ENCODE measurements at regions of chr14 and their contacts with region 1.

Region 1: DNA sequence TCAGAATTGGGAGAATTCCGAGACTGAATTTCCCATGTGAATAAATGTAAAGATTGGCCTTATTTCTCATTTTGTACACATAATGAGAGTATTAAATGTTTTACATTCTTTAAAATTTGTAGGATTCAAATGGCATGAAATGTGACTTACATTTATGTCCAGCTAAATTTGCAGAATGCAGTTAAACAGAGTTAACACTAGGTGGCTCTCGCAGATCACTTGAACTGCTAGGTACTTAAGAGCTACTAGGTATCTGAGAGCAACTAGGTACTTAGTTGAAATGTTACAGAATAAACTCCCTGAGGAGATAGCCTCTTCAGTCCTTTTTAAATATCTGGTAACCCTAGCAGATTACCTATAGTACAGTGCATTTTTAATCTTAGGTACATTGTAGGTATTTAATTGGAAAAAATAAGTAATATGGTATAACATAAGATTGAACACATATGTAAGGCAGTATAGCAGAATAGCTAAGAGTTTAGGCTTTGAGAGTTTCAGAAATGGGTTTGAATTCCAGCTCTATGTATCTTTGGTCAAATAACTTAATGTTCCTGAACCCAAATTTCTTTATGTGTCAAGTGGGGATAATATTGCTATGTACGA is 73.8 kb downstream of the KIAA0586 start:
- DNase-seq: peak in 1 of 2 donors; percentile 22
- ATAC-seq: peak in 3 of 8 donors; percentile 44 to 62 (median 50)
- H3K4me3 ChIP-seq: no peak overlapping the region
- H3K27ac ChIP-seq: no peak overlapping the region
- H3K4me1 ChIP-seq: no peaks in the 10 kb centered on the region
- H3K27me3 ChIP-seq: no peaks in the 10 kb centered on the region
- CTCF ChIP-seq: peak; percentile 57 to 87 (median 82)

Region 2: DNA sequence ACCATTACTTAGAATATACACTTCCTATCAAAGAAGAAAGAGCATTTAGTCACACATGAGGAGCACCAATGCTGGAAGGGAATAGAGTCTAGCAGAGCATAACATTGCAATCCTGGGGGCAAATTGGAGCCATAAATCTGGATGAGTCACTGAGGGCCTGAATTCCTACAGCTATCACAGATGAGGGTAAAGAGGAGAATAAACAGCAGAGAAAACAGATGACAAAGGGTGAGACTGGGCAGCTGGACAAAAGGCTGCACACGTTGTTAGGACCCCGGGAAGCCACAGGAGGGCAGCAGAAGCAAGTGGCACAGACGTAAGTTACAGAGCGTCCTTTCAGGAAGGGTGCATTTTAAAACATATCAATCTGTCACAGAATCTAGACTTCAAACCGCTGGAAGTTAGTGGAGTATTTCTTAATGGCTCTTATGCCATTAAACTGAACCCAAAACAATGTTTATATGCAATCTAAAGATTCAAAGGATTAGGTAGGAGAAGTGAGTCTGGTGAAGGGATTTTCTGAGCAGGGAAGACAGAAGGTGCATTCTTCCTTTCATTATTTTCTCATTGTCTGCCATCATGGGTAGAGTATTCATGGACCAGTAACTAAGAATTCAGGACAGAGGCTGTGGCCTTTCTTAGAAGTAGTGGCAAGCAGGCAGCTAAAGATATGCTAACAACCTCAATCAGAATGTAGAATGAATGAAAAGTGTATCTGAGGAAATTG is 527.3 kb after region 1 on chr14:
- intact Hi-C with region 1: loop called in 1 of 10 experiments (anchors 10 kb)
- DNase-seq: peak; percentile 25 to 41
- ATAC-seq: peak in 7 of 8 donors; percentile 58 to 81 (median 74)
- H3K4me3 ChIP-seq: no peak overlapping the region
- H3K27ac ChIP-seq: no peak overlapping the region
- H3K4me1 ChIP-seq: peaks cover 0 to 9% (median 0%) of the 10 kb centered on the region in 9 donors
- H3K27me3 ChIP-seq: no peaks in the 10 kb centered on the region
- CTCF ChIP-seq: peak; percentile 41 to 83 (median 77)

Region 3: GRCh38 chr14:59055439-59056045 is 554.2 kb after region 1 on chr14:
- intact Hi-C with region 1: loop called in 9 of 10 experiments (anchors 2 to 10 kb)
- DNase-seq: peak in 1 of 2 donors; percentile 13
- ATAC-seq: peak in 5 of 8 donors; percentile 38 to 81 (median 74)
- H3K4me3 ChIP-seq: no peak overlapping the region
- H3K27ac ChIP-seq: no peak overlapping the region
- H3K4me1 ChIP-seq: no peaks in the 10 kb centered on the region
- H3K27me3 ChIP-seq: peaks cover 0 to 9% (median 0%) of the 10 kb centered on the region in 7 donors
- CTCF ChIP-seq: peak; percentile 50 to 87 (median 75)

Region 4: DNA sequence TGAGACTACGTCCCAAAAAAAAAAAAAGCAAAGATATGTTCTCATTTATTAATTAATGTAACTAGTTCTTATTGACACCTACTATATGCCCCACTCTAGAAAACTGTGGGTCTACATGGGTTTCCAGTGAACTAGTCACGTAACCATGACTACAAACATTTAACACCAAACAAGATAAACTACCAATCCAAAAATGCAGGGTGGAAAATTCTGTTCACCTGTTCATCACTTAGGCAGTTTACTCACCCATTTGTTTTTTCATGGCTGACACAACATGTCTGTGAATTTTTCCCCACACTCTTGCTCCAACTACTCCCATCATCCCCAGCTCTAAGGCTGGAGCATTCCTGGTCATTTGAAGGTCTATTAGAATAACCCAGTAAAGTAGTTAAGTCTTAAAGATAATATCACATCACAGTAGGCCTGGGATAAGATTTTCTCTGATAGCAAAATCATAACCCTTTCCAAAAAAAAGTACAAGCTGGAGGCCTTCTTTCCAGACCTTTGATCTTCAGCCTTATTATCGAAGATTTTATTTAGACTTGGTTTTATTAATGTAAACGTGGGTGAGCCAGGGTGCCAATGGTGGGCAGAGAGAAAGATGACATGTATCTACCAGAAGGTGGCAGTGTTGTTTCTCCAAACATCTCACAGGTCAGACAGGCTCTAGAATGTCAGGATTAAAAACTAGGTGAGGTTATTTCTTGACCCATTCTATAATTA is 625.6 kb after region 1 on chr14:
- intact Hi-C with region 1: loop called in 1 of 10 experiments (anchors 5 kb)
- DNase-seq: peak in 1 of 2 donors; percentile 32
- ATAC-seq: peak in 7 of 8 donors; percentile 79 to 91 (median 89)
- H3K4me3 ChIP-seq: no peak overlapping the region
- H3K27ac ChIP-seq: no peak overlapping the region
- H3K4me1 ChIP-seq: peaks cover 0 to 9% (median 0%) of the 10 kb centered on the region in 9 donors
- H3K27me3 ChIP-seq: no peaks in the 10 kb centered on the region
- CTCF ChIP-seq: peak; percentile 60 to 88 (median 81)